Activated CD4-positive, alpha-beta memory T cell treated with anti-CD3 and anti-CD28 coated beads, Interleukin-2, amount 10 ng/mL, durations not matched to agents 7 days and 5 days (primary cell): ENCODE measurements at regions of chr3 and their contacts with region 1.

Region 1: GRCh38 chr3:63818281-63819150 is 583 bp upstream of the C3orf49 start:
- DNase-seq: peak; percentile 60
- H3K4me3 Mint-ChIP-seq: no peak overlapping the region
- H3K27ac Mint-ChIP-seq: no peak overlapping the region
- H3K4me1 Mint-ChIP-seq: no peaks in the 10 kb centered on the region
- H3K27me3 Mint-ChIP-seq: no peaks in the 10 kb centered on the region

Region 2: DNA sequence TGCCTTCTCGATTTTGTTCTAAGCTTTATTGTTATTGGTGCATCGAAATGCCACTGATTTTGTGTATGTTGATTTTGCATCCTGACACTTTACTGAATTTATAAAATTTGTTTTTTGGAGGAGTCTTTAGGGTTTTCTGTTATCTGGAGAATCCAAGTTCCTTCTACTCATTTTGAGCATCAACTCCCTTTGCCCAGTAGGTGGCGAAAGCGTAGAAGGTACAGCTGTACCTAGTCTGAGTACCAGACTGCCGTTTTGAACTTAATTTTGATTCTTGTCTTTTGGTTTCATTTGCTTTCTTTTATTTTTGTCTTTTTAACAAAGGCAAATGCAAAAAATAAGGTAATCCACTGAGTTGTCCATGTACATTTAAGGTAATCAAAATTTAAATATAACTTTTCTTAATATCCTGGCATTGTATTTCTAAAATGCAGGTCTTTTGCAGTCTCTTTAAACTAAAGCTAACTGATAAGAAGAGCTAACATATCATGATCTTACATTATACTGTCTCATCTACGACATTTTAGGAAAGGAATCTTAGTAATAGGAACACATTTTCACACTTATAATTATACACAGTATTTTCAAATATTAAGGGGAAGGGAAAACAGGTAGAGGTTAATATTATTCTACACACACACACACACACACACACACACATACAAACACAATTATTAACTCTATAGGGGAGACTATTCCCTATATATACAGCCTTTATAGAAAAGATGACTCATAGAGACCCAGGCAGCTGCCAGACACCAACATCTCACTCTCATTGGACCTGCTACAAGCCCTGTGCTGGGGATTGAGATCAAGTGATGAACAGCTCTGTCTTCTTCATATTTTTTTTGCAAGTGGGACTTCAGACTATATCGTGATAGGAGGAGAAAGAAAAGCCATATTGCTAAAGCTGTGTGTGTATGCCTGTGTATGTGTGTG is 468.7 kb before region 1 on chr3:
- CTCF ChIA-PET with region 1: interaction called, 23 read pairs
- POLR2A ChIA-PET with region 1: no interaction called
- DNase-seq: peak; percentile 42
- H3K4me3 Mint-ChIP-seq: no peak overlapping the region
- H3K27ac Mint-ChIP-seq: no peak overlapping the region
- H3K4me1 Mint-ChIP-seq: no peaks in the 10 kb centered on the region
- H3K27me3 Mint-ChIP-seq: peaks cover 9% of the 10 kb centered on the region

Region 3: DNA sequence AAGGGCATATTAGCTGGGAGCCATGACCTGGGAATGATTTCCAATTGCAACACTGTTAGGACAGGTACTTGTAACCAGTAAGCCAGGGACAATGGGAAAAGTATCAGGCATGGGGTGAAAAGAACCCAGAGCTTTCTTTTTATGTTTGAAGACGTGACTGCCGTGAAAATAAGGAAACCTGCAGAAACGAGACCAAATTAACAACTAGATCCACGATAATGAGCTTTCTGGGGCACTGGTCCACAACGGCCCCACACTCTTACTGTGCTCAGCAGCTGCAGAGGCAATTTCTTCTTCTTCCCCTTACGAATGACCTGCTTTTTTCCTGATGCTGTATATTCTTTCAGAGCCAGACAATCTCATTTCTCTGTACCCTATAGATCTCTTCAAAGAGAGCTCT is 12.0 kb after region 1 on chr3:
- CTCF ChIA-PET with region 1: interaction called, 20 read pairs
- POLR2A ChIA-PET with region 1: no interaction called
- DNase-seq: no peak
- H3K4me3 Mint-ChIP-seq: no peak overlapping the region
- H3K27ac Mint-ChIP-seq: no peak overlapping the region
- H3K4me1 Mint-ChIP-seq: no peaks in the 10 kb centered on the region
- H3K27me3 Mint-ChIP-seq: no peaks in the 10 kb centered on the region

Region 4: GRCh38 chr3:63937661-63938651 is 119.4 kb after region 1 on chr3:
- CTCF ChIA-PET with region 1: no interaction called
- POLR2A ChIA-PET with region 1: no interaction called
- DNase-seq: peak; percentile 19
- H3K4me3 Mint-ChIP-seq: no peak overlapping the region
- H3K27ac Mint-ChIP-seq: no peak overlapping the region
- H3K4me1 Mint-ChIP-seq: peaks cover 70% of the 10 kb centered on the region
- H3K27me3 Mint-ChIP-seq: no peaks in the 10 kb centered on the region